ENCODE measurements at regions of chr3 and their contacts with region 1.

Region 1: GRCh38 chr3:37974121-37975083 is 16.2 kb upstream of the VILL start:
- DNase-seq: peak; percentile 73 to 80
- H3K4me3 ChIP-seq: no peak overlapping the region
- H3K4me3 Mint-ChIP-seq: no peak overlapping the region
- H3K27ac Mint-ChIP-seq: peak overlapping the region; percentile 60
- H3K4me1 ChIP-seq: peaks cover 24% of the 10 kb centered on the region
- H3K4me1 Mint-ChIP-seq: peaks cover 28% of the 10 kb centered on the region
- H3K27me3 ChIP-seq: no peaks in the 10 kb centered on the region
- H3K27me3 Mint-ChIP-seq: no peaks in the 10 kb centered on the region
- CTCF ChIP-seq: peak; percentile 75 to 84

Region 2: GRCh38 chr3:37855363-37855970 is 118.9 kb before region 1 on chr3:
- CTCF ChIA-PET with region 1: interaction called, 64 read pairs
- POLR2A ChIA-PET with region 1: no interaction called
- intact Hi-C with region 1: no loop called
- DNase-seq: peak; percentile 76 to 89
- H3K4me3 ChIP-seq: no peak overlapping the region
- H3K4me3 Mint-ChIP-seq: no peak overlapping the region
- H3K27ac Mint-ChIP-seq: no peak overlapping the region
- H3K4me1 ChIP-seq: peaks cover 7% of the 10 kb centered on the region
- H3K4me1 Mint-ChIP-seq: no peaks in the 10 kb centered on the region
- H3K27me3 ChIP-seq: no peaks in the 10 kb centered on the region
- H3K27me3 Mint-ChIP-seq: no peaks in the 10 kb centered on the region
- CTCF ChIP-seq: peak; percentile 87 to 91

Region 3: DNA sequence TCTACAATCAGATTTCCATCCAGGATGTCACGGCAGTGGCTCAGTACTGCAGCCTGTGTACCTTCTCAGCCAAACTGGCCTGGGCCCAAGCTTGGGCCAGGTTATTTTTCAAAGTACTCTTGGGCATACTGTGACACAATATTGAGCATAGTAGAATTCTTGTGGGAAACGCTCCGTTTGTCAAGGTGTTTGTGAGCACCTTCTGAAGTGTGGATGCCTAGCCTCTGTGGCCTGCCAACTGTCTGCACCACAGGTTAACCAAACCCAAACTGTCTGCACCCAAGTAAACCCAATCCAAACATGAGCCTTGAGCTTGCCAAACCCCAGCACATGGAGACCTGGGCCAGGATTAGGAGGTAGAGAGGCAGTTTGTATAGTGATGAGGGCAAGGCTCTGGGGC is 87.3 kb before region 1 on chr3:
- CTCF ChIA-PET with region 1: no interaction called
- POLR2A ChIA-PET with region 1: no interaction called
- intact Hi-C with region 1: no loop called
- DNase-seq: no peak
- H3K4me3 ChIP-seq: no peak overlapping the region
- H3K4me3 Mint-ChIP-seq: no peak overlapping the region
- H3K27ac Mint-ChIP-seq: no peak overlapping the region
- H3K4me1 ChIP-seq: no peaks in the 10 kb centered on the region
- H3K4me1 Mint-ChIP-seq: no peaks in the 10 kb centered on the region
- H3K27me3 ChIP-seq: no peaks in the 10 kb centered on the region
- H3K27me3 Mint-ChIP-seq: no peaks in the 10 kb centered on the region
- CTCF ChIP-seq: no peak

Region 4: GRCh38 chr3:37935756-37936666 is 38.4 kb before region 1 on chr3:
- CTCF ChIA-PET with region 1: no interaction called
- POLR2A ChIA-PET with region 1: no interaction called
- intact Hi-C with region 1: no loop called
- DNase-seq: peak; percentile 77 to 84
- H3K4me3 ChIP-seq: no peak overlapping the region
- H3K4me3 Mint-ChIP-seq: peak overlapping the region; percentile 28
- H3K27ac Mint-ChIP-seq: peak overlapping the region; percentile 91
- H3K4me1 ChIP-seq: peaks cover 45% of the 10 kb centered on the region
- H3K4me1 Mint-ChIP-seq: peaks cover 41% of the 10 kb centered on the region
- H3K27me3 ChIP-seq: no peaks in the 10 kb centered on the region
- H3K27me3 Mint-ChIP-seq: no peaks in the 10 kb centered on the region
- CTCF ChIP-seq: no peak

Region 5: DNA sequence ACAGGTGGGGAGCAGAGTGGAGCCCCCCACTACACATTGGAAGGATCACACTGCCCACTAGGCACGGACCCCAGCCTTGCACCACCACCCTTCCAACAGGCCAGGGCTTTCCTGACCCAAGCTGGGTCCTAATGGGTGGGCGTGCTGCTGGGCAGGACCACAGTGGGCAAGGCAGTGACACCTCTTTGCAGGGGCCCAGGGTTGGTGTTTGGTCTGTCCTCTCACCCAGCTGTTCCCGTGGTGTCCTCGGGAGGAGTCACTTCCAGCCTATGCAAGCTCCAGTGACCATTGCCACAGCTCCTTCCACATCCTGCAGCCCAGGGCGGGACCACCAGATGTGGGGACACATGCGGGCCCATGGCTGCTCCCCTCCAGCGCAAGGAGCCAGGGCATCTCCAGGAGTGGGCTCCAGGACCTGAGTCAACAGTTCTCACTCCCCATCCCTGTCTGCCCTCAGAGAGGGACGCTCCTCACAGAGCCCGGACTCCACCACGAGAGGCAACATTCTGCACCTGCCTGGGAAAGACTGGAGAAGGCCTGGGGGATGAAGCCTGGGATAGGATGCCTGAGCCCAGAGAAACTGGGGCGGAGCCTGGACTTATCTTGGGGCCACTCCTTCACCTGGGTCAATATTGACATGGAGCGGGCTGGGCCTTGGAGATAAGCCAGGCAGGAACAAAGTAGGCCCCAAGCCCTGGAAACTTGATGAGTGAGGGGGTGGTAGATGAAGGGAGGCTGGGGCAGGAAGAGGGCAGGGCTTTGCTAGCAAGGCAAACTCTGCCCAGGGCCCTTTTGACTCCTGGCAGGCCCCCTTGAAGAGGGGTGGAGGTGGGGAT is 12.3 kb after region 1 on chr3:
- CTCF ChIA-PET with region 1: interaction called, 13 read pairs
- POLR2A ChIA-PET with region 1: no interaction called
- intact Hi-C with region 1: no loop called
- DNase-seq: peak; percentile 96 to 98
- H3K4me3 ChIP-seq: peak overlapping the region; percentile 13
- H3K4me3 Mint-ChIP-seq: peak overlapping the region; percentile 59
- H3K27ac Mint-ChIP-seq: peak overlapping the region; percentile 83
- H3K4me1 ChIP-seq: peaks cover 78% of the 10 kb centered on the region
- H3K4me1 Mint-ChIP-seq: peaks cover 58% of the 10 kb centered on the region
- H3K27me3 ChIP-seq: no peaks in the 10 kb centered on the region
- H3K27me3 Mint-ChIP-seq: no peaks in the 10 kb centered on the region
- CTCF ChIP-seq: peak in 1 of 2 experiments; percentile 24

Region 6: DNA sequence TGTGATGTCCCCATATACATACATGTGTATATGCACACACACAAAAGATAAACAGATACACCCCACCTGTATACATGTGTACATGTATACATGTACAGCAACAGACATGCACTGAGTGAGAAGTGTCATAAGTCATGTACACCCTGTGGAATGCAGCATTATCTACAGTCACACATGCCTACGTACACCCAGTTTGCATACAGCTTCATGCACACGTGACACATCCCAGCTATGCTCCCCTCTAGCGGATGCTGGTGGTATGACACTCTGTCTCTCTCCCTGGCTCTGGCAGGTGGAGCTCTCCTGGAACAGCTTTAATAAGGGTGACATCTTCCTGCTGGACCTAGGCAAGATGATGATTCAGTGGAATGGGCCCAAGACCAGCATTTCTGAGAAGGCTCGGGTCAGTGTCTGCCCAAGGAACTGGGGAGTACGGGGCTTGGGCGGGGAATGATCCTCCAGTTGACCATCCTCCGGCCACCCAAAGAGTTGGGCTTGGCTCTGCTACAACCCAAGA is 22.4 kb after region 1 on chr3:
- CTCF ChIA-PET with region 1: interaction called, 34 read pairs
- POLR2A ChIA-PET with region 1: interaction called, 5 read pairs
- intact Hi-C with region 1: loop called (anchors 1 kb)
- DNase-seq: peak; percentile 87
- H3K4me3 ChIP-seq: no peak overlapping the region
- H3K4me3 Mint-ChIP-seq: peak overlapping the region; percentile 25
- H3K27ac Mint-ChIP-seq: peak overlapping the region; percentile 48
- H3K4me1 ChIP-seq: peaks cover 67% of the 10 kb centered on the region
- H3K4me1 Mint-ChIP-seq: peaks cover 54% of the 10 kb centered on the region
- H3K27me3 ChIP-seq: no peaks in the 10 kb centered on the region
- H3K27me3 Mint-ChIP-seq: no peaks in the 10 kb centered on the region
- CTCF ChIP-seq: peak; percentile 81 to 83

Region 7: DNA sequence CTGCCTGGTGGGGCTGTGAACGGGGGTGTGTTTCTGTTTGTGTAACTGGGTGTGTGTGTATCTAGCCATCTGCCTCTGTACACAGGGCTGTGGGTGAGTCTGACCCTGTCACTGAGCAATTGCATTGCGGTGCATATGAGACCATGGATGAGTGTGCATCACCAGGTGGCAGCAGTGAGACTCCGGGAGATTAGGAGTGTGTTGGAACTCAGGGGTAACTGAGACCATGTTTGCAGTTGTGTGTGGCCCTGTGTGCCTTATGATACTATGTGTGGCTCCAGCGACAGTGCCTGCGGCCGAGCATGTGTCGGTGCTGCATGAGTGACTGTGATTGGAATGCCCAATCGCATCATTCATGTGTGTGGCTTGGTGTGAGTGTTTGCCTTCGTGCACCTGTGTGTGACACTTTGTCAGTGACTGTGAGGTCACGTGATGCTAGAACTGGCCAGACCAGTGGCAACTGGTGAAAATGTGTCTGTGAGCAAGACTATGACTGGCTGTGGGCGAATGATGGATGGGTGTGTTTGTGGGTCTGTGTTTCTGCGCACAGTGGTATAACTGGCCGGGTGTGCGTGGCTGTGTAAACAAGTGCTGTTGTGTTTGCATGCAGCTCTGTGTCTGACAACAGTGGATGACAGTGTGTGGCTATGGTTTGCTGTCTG is 30.1 kb after region 1 on chr3:
- CTCF ChIA-PET with region 1: interaction called, 44 read pairs
- POLR2A ChIA-PET with region 1: interaction called, 3 read pairs
- intact Hi-C with region 1: loop called (anchors 1 kb)
- DNase-seq: peak; percentile 83 to 86
- H3K4me3 ChIP-seq: no peak overlapping the region
- H3K4me3 Mint-ChIP-seq: peak overlapping the region; percentile 26
- H3K27ac Mint-ChIP-seq: peak overlapping the region; percentile 23
- H3K4me1 ChIP-seq: peaks cover 21% of the 10 kb centered on the region
- H3K4me1 Mint-ChIP-seq: peaks cover 25% of the 10 kb centered on the region
- H3K27me3 ChIP-seq: no peaks in the 10 kb centered on the region
- H3K27me3 Mint-ChIP-seq: no peaks in the 10 kb centered on the region
- CTCF ChIP-seq: peak; percentile 73 to 78

Region 8: DNA sequence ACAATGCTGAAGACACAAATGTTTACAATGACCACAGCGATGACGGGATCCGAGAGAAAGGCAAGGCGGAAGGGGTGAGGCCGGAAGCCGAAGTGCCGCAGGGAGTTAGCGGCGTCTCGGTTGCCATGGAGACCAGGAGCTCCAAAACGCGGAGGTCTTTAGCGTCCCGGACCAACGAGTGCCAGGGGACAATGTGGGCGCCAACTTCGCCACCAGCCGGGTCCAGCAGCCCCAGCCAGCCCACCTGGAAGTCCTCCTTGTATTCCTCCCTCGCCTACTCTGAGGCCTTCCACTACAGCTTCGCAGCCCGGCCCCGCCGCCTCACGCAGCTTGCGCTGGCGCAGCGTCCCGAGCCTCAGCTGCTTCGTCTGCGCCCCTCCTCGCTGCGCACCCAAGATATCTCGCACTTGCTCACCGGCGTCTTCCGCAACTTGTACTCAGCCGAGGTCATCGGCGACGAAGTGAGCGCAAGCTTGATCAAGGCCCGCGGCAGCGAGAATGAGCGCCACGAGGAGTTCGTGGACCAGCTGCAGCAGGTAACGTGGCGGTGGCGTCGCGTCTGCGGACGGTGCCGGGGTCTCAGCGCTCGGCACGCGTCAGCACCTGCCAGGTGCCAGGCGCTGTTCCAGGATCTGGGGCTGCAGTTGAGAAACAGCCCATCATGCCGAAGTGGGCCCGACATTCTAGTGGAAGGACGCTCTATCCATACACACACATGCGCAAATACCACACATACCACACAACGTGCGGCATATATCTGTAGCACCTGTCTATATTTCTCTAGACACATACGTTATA is 64.9 kb after region 1 on chr3 and contains the start of gene DLEC1:
- CTCF ChIA-PET with region 1: interaction called, 6 read pairs
- POLR2A ChIA-PET with region 1: no interaction called
- intact Hi-C with region 1: loop called (anchors 1 kb)
- DNase-seq: peak; percentile 67 to 69
- H3K4me3 ChIP-seq: peak within 1 kb of the TSS; percentile 58
- H3K4me3 Mint-ChIP-seq: peak within 1 kb of the TSS; percentile 57
- H3K27ac Mint-ChIP-seq: no peak within 1 kb of the TSS
- H3K4me1 ChIP-seq: no peaks in the 10 kb centered on the region
- H3K4me1 Mint-ChIP-seq: peaks cover 13% of the 10 kb centered on the region
- H3K27me3 ChIP-seq: no peaks in the 10 kb centered on the region
- H3K27me3 Mint-ChIP-seq: no peaks in the 10 kb centered on the region
- CTCF ChIP-seq: no peak
- total RNA-seq, gene DLEC1: 0.11 and 0.35 TPM in 2 replicates

Measured in Caco-2 (cell line).